ENCODE measurements at regions of chr19 and their contacts with region 1.

Region 1: GRCh38 chr19:52442179-52442578 is 11.2 kb upstream of the ZNF578 start:
- DNase-seq: no peak
- H3K4me3 ChIP-seq: no peak overlapping the region
- H3K27ac ChIP-seq: no peak overlapping the region
- H3K4me1 ChIP-seq: no peaks in the 10 kb centered on the region
- H3K27me3 ChIP-seq: no peaks in the 10 kb centered on the region
- CTCF ChIP-seq: no peak
- POLR2A ChIP-seq: no peak

Region 2: GRCh38 chr19:52453324-52454094 is 11.3 kb after region 1 on chr19 and contains the start of gene ZNF578:
- intact Hi-C with region 1: no loop called
- DNase-seq: peak; percentile 44 to 69
- H3K4me3 ChIP-seq: peak within 1 kb of the TSS; percentile 62 to 76 (median 64)
- H3K27ac ChIP-seq: no peak within 1 kb of the TSS
- H3K4me1 ChIP-seq: no peaks in the 10 kb centered on the region
- H3K27me3 ChIP-seq: no peaks in the 10 kb centered on the region
- CTCF ChIP-seq: no peak
- POLR2A ChIP-seq: no peak
- total RNA-seq, gene ZNF578: 1.3 to 3.7 (median 1.4) TPM

Region 3: DNA sequence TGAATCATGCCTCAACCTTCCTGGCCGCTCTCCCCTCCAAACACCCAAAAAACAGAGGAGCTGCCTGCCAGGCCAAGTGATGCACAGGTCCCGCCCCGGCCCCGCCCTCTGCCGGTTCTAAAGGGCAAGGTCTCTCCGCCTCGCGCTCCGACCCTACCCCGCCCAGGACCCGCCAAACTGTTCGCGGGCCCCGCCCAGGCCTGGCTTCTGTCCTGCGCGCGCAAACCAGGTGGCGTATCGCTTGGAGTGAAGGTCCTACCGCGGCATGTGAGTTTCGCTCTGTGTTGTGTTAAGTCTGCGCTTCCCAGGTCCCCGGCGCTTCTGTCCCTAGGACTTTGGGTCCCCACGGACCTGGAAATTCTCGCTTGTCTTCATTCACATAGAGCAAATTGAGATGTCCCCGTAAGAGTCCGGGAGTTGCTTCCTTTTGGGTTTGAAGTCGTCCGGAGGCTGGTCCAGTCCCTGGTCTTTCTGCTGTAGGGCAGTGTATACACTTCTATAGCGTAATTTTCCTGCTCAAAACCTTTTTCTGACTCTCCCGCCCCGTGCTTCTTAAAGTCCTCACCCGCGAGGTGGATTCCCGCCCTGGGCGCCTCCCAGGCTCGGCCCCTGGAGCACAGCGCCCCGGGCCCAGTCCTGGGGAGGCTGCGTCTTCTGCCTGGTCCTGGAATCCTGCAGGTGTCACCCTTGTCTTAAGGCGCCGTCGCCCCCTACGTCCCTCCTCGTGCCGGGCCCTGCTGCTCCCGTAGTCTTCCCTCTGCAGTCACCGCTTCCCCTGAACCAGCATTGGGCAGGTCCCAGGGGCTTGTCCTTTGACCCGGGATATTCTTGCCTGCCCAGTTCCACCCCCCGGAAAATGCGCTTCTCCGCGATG is 50.7 kb after region 1 on chr19:
- intact Hi-C with region 1: loop called (anchors 2 kb)
- DNase-seq: no peak
- H3K4me3 ChIP-seq: peak overlapping the region in 2 of 3 donors; percentile 9 to 41
- H3K27ac ChIP-seq: no peak overlapping the region
- H3K4me1 ChIP-seq: no peaks in the 10 kb centered on the region
- H3K27me3 ChIP-seq: no peaks in the 10 kb centered on the region
- CTCF ChIP-seq: no peak
- POLR2A ChIP-seq: no peak

Region 4: GRCh38 chr19:54081032-54081431 is 1638.9 kb after region 1 on chr19 and contains the start of gene TARM1:
- intact Hi-C with region 1: no loop called
- DNase-seq: no peak
- H3K4me3 ChIP-seq: no peak within 1 kb of the TSS
- H3K27ac ChIP-seq: no peak within 1 kb of the TSS
- H3K4me1 ChIP-seq: no peaks in the 10 kb centered on the region
- H3K27me3 ChIP-seq: no peaks in the 10 kb centered on the region
- CTCF ChIP-seq: no peak
- POLR2A ChIP-seq: no peak
- total RNA-seq, gene TARM1: not detected